GM12878 (cell line): ENCODE measurements at regions of chr9 and their contacts with region 1.

Region 1: GRCh38 chr9:110996436-110997220 is 41.6 kb downstream of the LPAR1 start:
- DNase-seq: no peak
- ATAC-seq: no peak
- H3K4me3 ChIP-seq: no peak overlapping the region
- H3K27ac ChIP-seq: no peak overlapping the region
- H3K4me1 ChIP-seq: peaks cover 6% of the 10 kb centered on the region
- H3K27me3 ChIP-seq: no peaks in the 10 kb centered on the region; a peak in 1 of 4 replicates
- CTCF ChIP-seq: no peak
- EP300 ChIP-seq: no peak
- POLR2A ChIP-seq: no peak
- RAD21 ChIP-seq: no peak

Region 2: DNA sequence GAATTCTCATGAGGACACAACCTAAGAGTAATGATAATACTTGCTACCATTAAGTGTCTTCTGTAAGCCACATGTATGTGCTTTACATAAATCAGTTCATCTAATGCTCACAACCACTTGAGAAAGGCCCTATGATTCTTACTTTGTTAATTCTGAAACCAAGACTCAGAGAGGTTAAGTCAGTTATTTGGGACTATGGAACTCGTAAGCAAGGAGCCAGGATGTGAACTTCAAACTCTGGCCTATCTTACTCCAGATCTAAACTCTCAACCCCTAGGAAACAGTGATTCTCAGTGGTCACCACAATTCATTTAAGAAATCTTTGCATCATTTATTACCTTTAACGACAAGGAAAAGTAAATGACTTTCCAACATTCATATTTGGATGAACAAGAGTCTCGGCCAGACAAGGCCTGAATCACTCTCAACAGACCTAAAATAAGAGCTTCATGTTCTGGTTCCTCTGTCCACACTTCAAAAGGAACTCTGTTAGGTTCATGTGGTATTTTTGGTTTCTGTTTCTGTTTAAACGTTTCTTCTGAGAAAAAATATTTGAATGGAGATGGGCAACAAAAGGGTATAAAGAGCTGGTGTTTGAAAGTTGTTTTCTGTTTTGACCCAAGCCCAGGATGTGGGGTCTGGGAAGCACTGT is 63.2 kb before region 1 on chr9:
- CTCF ChIA-PET with region 1: no interaction called
- POLR2A ChIA-PET with region 1: interaction called, 4 read pairs
- RAD21 ChIA-PET with region 1: interaction called, 8 read pairs
- SMC1A ChIA-PET with region 1: interaction called, 12 read pairs
- in situ Hi-C with region 1: no loop called
- intact Hi-C with region 1: no loop called
- DNase-seq: peak; percentile 41
- ATAC-seq: peak; percentile 80
- H3K4me3 ChIP-seq: peak overlapping the region; percentile 5; the same call in 1 of the 2 replicates
- H3K27ac ChIP-seq: peak overlapping the region; percentile 47
- H3K4me1 ChIP-seq: peaks cover 10% of the 10 kb centered on the region
- H3K27me3 ChIP-seq: no peaks in the 10 kb centered on the region
- CTCF ChIP-seq: no peak
- EP300 ChIP-seq: 0 out of 4 replicates have a peak, but pooled peaks of 1 of the 2 experiments have one; percentile 15
- POLR2A ChIP-seq: no peak
- RAD21 ChIP-seq: no peak

Region 3: DNA sequence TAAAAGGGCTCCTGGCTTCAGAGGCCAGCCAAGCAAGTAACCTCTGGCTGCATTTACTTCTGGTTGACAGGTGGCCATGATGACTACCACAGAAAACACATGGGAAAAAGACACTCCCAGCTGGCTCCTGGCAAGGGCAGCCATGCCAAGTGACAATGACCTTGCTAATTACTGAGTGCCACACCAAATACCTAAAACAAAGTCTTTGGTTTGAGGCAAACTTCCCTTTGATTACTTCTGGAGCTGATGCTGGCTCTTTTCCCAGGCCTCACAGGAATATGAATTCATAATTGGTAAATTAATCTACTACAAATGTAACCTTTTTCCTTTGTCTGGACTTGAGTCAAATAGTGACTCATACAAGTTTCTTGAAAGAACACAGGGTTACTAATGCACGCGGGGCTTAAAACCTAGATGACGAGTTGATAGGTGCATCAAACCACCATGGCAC is 19.3 kb before region 1 on chr9:
- CTCF ChIA-PET with region 1: interaction called, 4 read pairs
- POLR2A ChIA-PET with region 1: interaction called, 7 read pairs
- RAD21 ChIA-PET with region 1: interaction called, 15 read pairs
- SMC1A ChIA-PET with region 1: interaction called, 97 read pairs
- in situ Hi-C with region 1: no loop called
- intact Hi-C with region 1: no loop called
- DNase-seq: no peak
- ATAC-seq: peak; percentile 29
- H3K4me3 ChIP-seq: no peak overlapping the region
- H3K27ac ChIP-seq: no peak overlapping the region
- H3K4me1 ChIP-seq: no peaks in the 10 kb centered on the region
- H3K27me3 ChIP-seq: no peaks in the 10 kb centered on the region
- CTCF ChIP-seq: no peak
- EP300 ChIP-seq: no peak
- POLR2A ChIP-seq: no peak
- RAD21 ChIP-seq: no peak

Region 4: GRCh38 chr9:110986529-110986928 is 10.1 kb before region 1 on chr9:
- CTCF ChIA-PET with region 1: interaction called, 4 read pairs
- POLR2A ChIA-PET with region 1: interaction called, 14 read pairs
- RAD21 ChIA-PET with region 1: interaction called, 5 read pairs
- SMC1A ChIA-PET with region 1: interaction called, 74 read pairs
- in situ Hi-C with region 1: no loop called
- intact Hi-C with region 1: no loop called
- DNase-seq: no peak
- ATAC-seq: no peak; the same call in 1 of the 3 replicates
- H3K4me3 ChIP-seq: no peak overlapping the region
- H3K27ac ChIP-seq: no peak overlapping the region
- H3K4me1 ChIP-seq: no peaks in the 10 kb centered on the region
- H3K27me3 ChIP-seq: no peaks in the 10 kb centered on the region
- CTCF ChIP-seq: no peak
- EP300 ChIP-seq: no peak
- POLR2A ChIP-seq: no peak
- RAD21 ChIP-seq: no peak

Region 5: DNA sequence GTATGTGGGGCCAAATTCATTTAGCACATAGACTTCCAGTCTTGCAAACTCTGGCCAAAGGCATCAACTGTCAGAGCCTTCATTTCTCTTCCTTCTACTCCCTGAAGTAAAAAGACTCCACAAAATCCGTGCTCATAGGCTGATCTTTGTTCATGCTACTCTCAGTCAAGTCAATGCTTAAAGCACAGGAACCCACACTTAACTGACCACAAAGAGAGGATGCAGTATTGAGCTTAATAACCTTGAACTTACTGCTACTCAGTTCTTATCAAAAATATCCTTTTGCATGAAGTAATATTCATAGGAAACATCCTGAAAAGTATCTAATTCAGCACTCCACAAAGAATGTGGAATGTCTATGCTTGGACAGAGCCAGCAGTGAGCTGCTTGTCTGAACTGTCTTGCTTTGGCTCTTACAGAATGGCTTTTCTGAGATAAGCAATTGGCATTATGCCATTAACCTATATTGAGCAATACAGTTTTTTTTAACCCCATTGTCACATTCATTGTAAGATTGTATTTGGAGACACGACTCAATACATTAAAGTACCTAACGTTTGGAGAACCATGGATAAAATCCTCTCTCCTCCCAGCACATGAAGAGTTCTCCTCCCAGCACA is 19.9 kb after region 1 on chr9:
- CTCF ChIA-PET with region 1: interaction called, 25 read pairs
- POLR2A ChIA-PET with region 1: interaction called, 13 read pairs
- RAD21 ChIA-PET with region 1: interaction called, 20 read pairs
- SMC1A ChIA-PET with region 1: interaction called, 124 read pairs
- in situ Hi-C with region 1: no loop called
- intact Hi-C with region 1: no loop called
- DNase-seq: no peak
- ATAC-seq: peak; percentile 64
- H3K4me3 ChIP-seq: no peak overlapping the region
- H3K27ac ChIP-seq: no peak overlapping the region
- H3K4me1 ChIP-seq: no peaks in the 10 kb centered on the region
- H3K27me3 ChIP-seq: no peaks in the 10 kb centered on the region
- CTCF ChIP-seq: no peak
- EP300 ChIP-seq: no peak
- POLR2A ChIP-seq: no peak
- RAD21 ChIP-seq: no peak